ENCODE measurements at regions of chr3 and their contacts with region 1.

Region 1: GRCh38 chr3:185084901-185085300 is 68.0 kb downstream of the C3orf70 start:
- DNase-seq: no peak
- H3K4me3 ChIP-seq: no peak overlapping the region
- H3K27ac ChIP-seq: peak overlapping the region in 1 of 4 donors; percentile 2
- H3K4me1 ChIP-seq: peaks cover 0 to 39% (median 32%) of the 10 kb centered on the region in 4 donors
- H3K27me3 ChIP-seq: no peaks in the 10 kb centered on the region
- CTCF ChIP-seq: peak; percentile 40 to 52 (median 43)
- EP300 ChIP-seq: no peak
- POLR2A ChIP-seq: no peak

Region 2: DNA sequence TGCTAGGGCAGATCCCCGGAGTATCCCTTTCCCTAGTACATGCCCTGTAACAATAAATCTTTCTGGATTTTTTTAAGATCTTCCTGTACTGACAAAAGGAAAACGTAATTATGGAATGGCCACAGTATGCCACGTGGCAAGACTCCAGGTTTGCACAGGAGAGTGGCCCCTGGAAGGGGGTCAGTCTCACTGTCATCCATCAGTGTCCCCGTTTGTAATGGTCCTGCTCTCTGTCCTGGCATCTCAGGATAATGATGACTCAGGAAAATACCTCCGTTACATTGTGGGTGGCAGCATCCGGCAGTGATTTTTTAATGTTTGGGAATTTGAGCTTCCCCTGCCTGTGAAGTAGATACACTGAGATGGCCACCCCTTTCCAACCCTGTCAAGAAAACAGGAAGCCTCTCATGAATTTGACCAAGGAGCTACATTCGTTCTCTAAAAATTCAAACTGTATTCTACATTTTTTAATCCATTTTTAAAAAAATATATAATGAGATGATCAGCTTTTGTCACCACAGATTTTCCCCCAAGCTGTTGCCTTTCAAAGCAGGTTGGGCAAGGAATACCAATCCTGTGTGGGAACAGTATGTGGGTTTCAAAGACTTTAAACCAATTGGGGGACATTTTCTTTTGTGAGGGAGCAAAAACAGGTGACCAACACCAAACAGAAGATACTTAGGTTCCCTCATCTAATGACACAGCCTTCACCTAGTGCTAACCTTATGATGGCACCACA is 42.4 kb before region 1 on chr3:
- intact Hi-C with region 1: no loop called
- DNase-seq: no peak
- H3K4me3 ChIP-seq: no peak overlapping the region
- H3K27ac ChIP-seq: no peak overlapping the region
- H3K4me1 ChIP-seq: peaks cover 0 to 16% (median 13%) of the 10 kb centered on the region in 4 donors
- H3K27me3 ChIP-seq: no peaks in the 10 kb centered on the region
- CTCF ChIP-seq: no peak
- EP300 ChIP-seq: no peak
- POLR2A ChIP-seq: no peak

Region 3: GRCh38 chr3:185152410-185153210 is 67.7 kb after region 1 on chr3 and contains the start of gene C3orf70:
- intact Hi-C with region 1: loop called (anchors 5 kb)
- DNase-seq: no peak
- H3K4me3 ChIP-seq: peak within 1 kb of the TSS; percentile 83 to 95 (median 90)
- H3K27ac ChIP-seq: peak within 1 kb of the TSS; percentile 95 to 98 (median 96)
- H3K4me1 ChIP-seq: peaks cover 6 to 57% (median 46%) of the 10 kb centered on the region in 4 donors
- H3K27me3 ChIP-seq: peaks cover 0 to 4% (median 0%) of the 10 kb centered on the region in 4 donors
- CTCF ChIP-seq: no peak
- EP300 ChIP-seq: no peak
- POLR2A ChIP-seq: no peak
- total RNA-seq, gene C3orf70: 33.1 to 54.0 (median 38.9) TPM

Measured in esophagus muscularis mucosa (tissue), 4 donors.